Activated naive CD4-positive, alpha-beta T cell treated with anti-CD3 and anti-CD28 coated beads for 36 hours (primary cell): ENCODE measurements at regions of chr7 and their contacts with region 1.

Region 1: GRCh38 chr7:148773334-148773733 is 74.6 kb downstream of the CUL1 start:
- DNase-seq: peak; percentile 54
- H3K4me3 Mint-ChIP-seq: no peak overlapping the region
- H3K27ac Mint-ChIP-seq: peak overlapping the region; percentile 71
- H3K4me1 Mint-ChIP-seq: peaks cover 29% of the 10 kb centered on the region
- H3K27me3 Mint-ChIP-seq: no peaks in the 10 kb centered on the region

Region 2: DNA sequence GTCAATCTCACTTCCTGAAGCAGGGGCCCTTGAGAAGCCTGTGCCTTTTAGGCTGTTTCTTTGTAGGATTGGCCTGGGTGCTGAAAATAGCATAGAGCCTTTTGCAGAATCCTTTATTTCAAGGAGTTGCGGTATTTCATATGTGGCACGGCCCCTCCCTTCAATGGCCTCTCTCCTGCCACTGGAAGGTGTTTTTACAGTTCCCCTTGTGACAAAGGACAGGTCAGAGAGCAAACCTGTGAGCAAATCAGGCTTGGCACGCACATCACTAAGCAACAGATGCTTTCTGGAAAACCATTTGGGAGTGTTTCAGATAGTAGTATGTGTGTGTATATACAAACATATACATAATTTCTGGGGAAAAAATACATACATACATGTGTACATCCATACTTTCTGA is 571.3 kb before region 1 on chr7:
- CTCF ChIA-PET with region 1: no interaction called
- intact Hi-C with region 1: no loop called
- DNase-seq: no peak
- H3K4me3 Mint-ChIP-seq: no peak overlapping the region
- H3K27ac Mint-ChIP-seq: no peak overlapping the region
- H3K4me1 Mint-ChIP-seq: no peaks in the 10 kb centered on the region
- H3K27me3 Mint-ChIP-seq: no peaks in the 10 kb centered on the region

Region 3: GRCh38 chr7:148575640-148576411 is 197.5 kb before region 1 on chr7:
- CTCF ChIA-PET with region 1: interaction called, 23 read pairs
- intact Hi-C with region 1: loop called (anchors 2 kb)
- DNase-seq: peak; percentile 84
- H3K4me3 Mint-ChIP-seq: no peak overlapping the region
- H3K27ac Mint-ChIP-seq: no peak overlapping the region
- H3K4me1 Mint-ChIP-seq: peaks cover 11% of the 10 kb centered on the region
- H3K27me3 Mint-ChIP-seq: no peaks in the 10 kb centered on the region

Region 4: GRCh38 chr7:148624735-148625134 is 148.6 kb before region 1 on chr7:
- CTCF ChIA-PET with region 1: no interaction called
- intact Hi-C with region 1: loop called (anchors 5 kb)
- DNase-seq: no peak
- H3K4me3 Mint-ChIP-seq: no peak overlapping the region
- H3K27ac Mint-ChIP-seq: no peak overlapping the region
- H3K4me1 Mint-ChIP-seq: peaks cover 56% of the 10 kb centered on the region
- H3K27me3 Mint-ChIP-seq: peaks cover 2% of the 10 kb centered on the region

Region 5: DNA sequence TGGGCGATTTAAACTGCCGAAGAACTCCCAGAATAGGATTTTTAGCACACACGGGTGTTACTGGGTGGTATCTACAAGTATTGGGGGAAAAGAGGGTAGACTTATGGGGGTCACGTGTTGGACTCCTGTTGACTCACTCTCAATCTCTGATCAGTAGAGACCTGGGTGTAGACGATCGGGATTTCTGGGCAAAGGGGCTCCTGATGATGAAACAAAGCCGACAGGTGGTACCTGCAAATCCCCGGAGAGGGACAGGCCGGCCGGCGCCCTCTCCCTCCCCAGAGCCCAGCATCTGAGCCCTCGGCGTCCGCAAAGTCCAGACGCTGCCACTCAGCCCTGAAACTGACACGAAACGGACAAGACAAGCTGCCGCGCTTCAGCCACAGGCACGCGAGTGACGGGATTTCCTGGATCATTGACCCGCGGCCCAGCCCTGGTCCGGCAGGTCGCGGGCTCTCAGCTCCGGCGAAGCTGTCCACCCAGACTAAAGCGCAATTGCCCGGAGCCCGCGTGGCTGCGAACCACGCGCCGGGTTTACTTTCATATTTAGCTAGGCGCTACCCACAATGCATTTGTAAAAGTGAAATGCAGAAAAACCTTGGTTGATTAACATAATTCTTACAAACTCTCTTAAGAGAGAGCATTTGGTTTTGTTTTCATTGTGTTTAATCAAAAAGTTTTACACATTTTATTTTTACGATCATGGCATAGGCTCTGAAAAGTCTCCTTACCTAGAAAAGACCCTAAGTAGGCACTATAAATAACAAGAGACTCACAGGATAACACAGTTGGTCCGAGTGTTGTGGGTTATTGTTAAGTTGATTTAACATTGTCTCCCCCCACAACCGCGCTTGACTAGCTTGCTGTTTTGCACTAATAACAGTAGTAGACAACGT is 167.6 kb after region 1 on chr7:
- CTCF ChIA-PET with region 1: no interaction called
- intact Hi-C with region 1: loop called (anchors 2 kb)
- DNase-seq: peak; percentile 68
- H3K4me3 Mint-ChIP-seq: peak overlapping the region; percentile 94
- H3K27ac Mint-ChIP-seq: peak overlapping the region; percentile 98
- H3K4me1 Mint-ChIP-seq: peaks cover 15% of the 10 kb centered on the region
- H3K27me3 Mint-ChIP-seq: no peaks in the 10 kb centered on the region

Region 6: DNA sequence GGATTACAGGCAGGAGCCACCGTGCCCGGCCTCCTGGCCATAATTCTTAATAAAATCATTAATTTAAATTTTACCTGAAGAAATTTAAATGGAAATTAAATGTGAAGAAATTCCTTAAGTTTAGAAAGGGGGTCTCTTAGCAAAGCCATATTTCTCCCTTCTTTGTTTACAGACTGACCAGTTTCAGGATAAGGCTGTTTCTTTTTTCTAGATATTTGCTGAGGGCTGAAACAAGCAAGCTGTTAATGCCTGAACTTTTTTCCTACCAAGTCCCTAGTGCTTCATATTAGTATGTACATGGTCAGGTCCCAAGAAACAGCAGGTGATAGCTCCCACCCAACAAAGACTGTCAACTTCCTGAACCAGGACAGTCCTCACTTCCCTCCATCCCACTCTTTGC is 273.1 kb after region 1 on chr7:
- CTCF ChIA-PET with region 1: no interaction called
- intact Hi-C with region 1: no loop called
- DNase-seq: no peak
- H3K4me3 Mint-ChIP-seq: no peak overlapping the region
- H3K27ac Mint-ChIP-seq: no peak overlapping the region
- H3K4me1 Mint-ChIP-seq: no peaks in the 10 kb centered on the region
- H3K27me3 Mint-ChIP-seq: no peaks in the 10 kb centered on the region